ENCODE measurements at regions of chr20 and their contacts with region 1.

Region 1: GRCh38 chr20:32681175-32682084 is 7.7 kb upstream of the C20orf203 start:
- DNase-seq: no peak

Region 2: DNA sequence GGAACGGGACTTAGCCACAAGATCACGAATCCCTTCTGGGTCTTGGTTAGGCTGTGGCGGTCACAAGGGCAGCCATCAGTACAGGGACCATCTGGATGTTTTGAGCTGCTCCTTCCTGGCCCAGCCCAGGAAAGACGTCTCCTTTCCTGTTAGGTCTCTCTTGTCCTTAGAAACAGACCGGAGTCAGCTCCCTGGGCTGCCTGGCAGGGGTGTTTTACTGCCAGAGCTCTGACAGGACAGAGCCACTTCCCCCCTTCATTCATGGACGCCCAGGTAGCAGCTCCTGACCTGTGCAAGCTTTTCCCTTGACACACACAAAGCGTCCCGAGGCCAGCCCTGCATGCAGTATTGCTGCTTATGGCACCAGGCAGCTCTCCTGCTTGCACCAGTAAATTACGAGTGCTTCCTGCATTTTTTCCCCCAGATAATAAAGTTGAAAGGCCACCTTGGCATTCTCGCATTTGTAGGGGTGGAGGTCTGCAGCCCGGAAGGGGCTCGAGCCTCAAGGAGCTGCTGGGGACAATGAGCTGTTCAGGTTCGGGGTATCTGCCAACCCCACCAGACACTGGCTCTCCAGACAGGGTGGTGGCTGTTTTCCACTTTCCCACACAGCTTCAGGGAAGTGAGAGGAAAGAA is 183.7 kb before region 1 on chr20:
- in situ Hi-C with region 1: no loop called
- DNase-seq: no peak

Region 3: GRCh38 chr20:32789896-32790750 is 108.7 kb after region 1 on chr20:
- in situ Hi-C with region 1: loop called (anchors 25 kb)
- DNase-seq: peak; percentile 81

Measured in SK-MEL-5 (cell line).